ENCODE measurements at regions of chr9 and their contacts with region 1.

Region 1: GRCh38 chr9:93589691-93590090 is 13.3 kb downstream of the PHF2 start:
- DNase-seq: peak; percentile 52
- ATAC-seq: peak; percentile 74
- H3K4me3 ChIP-seq: no peak overlapping the region
- H3K27ac ChIP-seq: no peak overlapping the region
- H3K4me1 ChIP-seq: peaks cover 6% of the 10 kb centered on the region
- H3K27me3 ChIP-seq: no peaks in the 10 kb centered on the region
- CTCF ChIP-seq: no peak
- POLR2A ChIP-seq: no peak
- RAD21 ChIP-seq: no peak

Region 2: GRCh38 chr9:92752812-92753404 is 836.8 kb before region 1 on chr9:
- CTCF ChIA-PET with region 1: interaction called, 10 read pairs
- POLR2A ChIA-PET with region 1: no interaction called
- dilution Hi-C with region 1: no loop called
- in situ Hi-C with region 1: no loop called
- intact Hi-C with region 1: no loop called
- DNase-seq: no peak
- ATAC-seq: no peak
- H3K4me3 ChIP-seq: no peak overlapping the region
- H3K27ac ChIP-seq: no peak overlapping the region
- H3K4me1 ChIP-seq: peaks cover 13% of the 10 kb centered on the region
- H3K27me3 ChIP-seq: no peaks in the 10 kb centered on the region
- CTCF ChIP-seq: no peak
- POLR2A ChIP-seq: no peak
- RAD21 ChIP-seq: no peak

Measured in IMR-90 (cell line).